GM12878 (cell line): ENCODE measurements at regions of chr1 and their contacts with region 1.

Region 1: DNA sequence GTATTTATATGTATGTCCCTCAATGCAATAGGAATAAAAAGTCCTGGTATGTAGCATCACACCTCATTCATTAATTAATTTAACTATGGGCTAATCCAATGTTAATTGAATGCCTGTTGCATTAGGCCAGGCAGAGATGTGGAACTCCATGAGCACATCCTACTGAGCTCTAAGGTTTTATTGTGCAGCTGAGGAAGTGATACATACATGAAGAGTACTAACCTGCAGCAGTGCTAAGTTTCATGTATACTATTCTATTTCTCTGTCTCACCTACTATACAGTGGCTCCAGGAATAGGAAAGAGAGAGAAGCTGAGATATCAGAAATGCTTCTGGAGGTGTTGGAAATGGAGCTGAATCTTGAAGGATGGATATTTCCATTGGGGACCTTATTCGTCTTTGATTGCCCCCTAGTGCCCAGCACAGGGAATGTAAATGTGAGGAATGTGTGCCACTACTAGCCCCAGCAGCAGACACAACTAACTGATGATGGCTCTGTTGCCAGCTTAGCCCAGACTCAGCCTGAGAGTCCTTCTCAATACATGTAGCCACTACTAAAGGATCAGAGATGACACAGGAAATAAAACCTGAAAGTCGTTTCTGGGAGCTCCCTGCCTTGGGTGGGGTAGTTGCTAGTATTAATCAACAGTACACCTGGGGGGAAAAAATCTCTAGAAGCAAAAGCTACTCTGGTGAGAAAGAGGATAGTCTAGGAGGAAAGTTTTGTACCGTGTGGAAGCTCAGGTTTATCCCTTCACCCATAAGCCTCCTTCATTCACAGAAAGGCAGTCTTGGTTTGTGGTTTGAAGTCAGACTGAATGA is 173.3 kb upstream of the FOXD3 start:
- DNase-seq: no peak
- ATAC-seq: peak; percentile 90
- H3K4me3 ChIP-seq: no peak overlapping the region
- H3K27ac ChIP-seq: no peak overlapping the region
- H3K4me1 ChIP-seq: no peaks in the 10 kb centered on the region
- H3K27me3 ChIP-seq: no peaks in the 10 kb centered on the region; a peak in 2 of 4 replicates
- CTCF ChIP-seq: peak; percentile 67 to 74 (median 69)
- EP300 ChIP-seq: no peak
- POLR2A ChIP-seq: no peak
- RAD21 ChIP-seq: peak; percentile 73

Region 2: GRCh38 chr1:62912028-62912638 is 236.9 kb before region 1 on chr1:
- CTCF ChIA-PET with region 1: interaction called, 7 read pairs
- POLR2A ChIA-PET with region 1: no interaction called
- RAD21 ChIA-PET with region 1: interaction called, 5 read pairs
- SMC1A ChIA-PET with region 1: no interaction called
- in situ Hi-C with region 1: no loop called
- intact Hi-C with region 1: loop called (anchors 5 kb)
- DNase-seq: no peak
- ATAC-seq: peak; percentile 48; the same call in 1 of the 3 replicates
- H3K4me3 ChIP-seq: no peak overlapping the region
- H3K27ac ChIP-seq: no peak overlapping the region
- H3K4me1 ChIP-seq: no peaks in the 10 kb centered on the region
- H3K27me3 ChIP-seq: peaks cover 0 to 2% of the 10 kb centered on the region in 2 experiments; a peak in 1 of 4 replicates
- CTCF ChIP-seq: peak; percentile 55 to 67 (median 66)
- EP300 ChIP-seq: no peak
- POLR2A ChIP-seq: no peak
- RAD21 ChIP-seq: no peak

Region 3: GRCh38 chr1:62962901-62963776 is 185.9 kb before region 1 on chr1:
- CTCF ChIA-PET with region 1: interaction called, 48 read pairs
- POLR2A ChIA-PET with region 1: no interaction called
- RAD21 ChIA-PET with region 1: interaction called, 6 read pairs
- SMC1A ChIA-PET with region 1: interaction called, 19 read pairs
- in situ Hi-C with region 1: loop called (anchors 10 kb)
- intact Hi-C with region 1: loop called (anchors 1 kb)
- DNase-seq: no peak
- ATAC-seq: peak; percentile 92
- H3K4me3 ChIP-seq: no peak overlapping the region
- H3K27ac ChIP-seq: no peak overlapping the region
- H3K4me1 ChIP-seq: peaks cover 10% of the 10 kb centered on the region
- H3K27me3 ChIP-seq: no peaks in the 10 kb centered on the region
- CTCF ChIP-seq: peak; percentile 67 to 71 (median 68)
- EP300 ChIP-seq: no peak
- POLR2A ChIP-seq: no peak
- RAD21 ChIP-seq: peak; percentile 75

Region 4: GRCh38 chr1:63004868-63005267 is 144.2 kb before region 1 on chr1:
- CTCF ChIA-PET with region 1: interaction called, 12 read pairs
- POLR2A ChIA-PET with region 1: no interaction called
- RAD21 ChIA-PET with region 1: interaction called, 10 read pairs
- SMC1A ChIA-PET with region 1: interaction called, 9 read pairs
- in situ Hi-C with region 1: no loop called
- intact Hi-C with region 1: no loop called
- DNase-seq: no peak
- ATAC-seq: no peak
- H3K4me3 ChIP-seq: no peak overlapping the region
- H3K27ac ChIP-seq: no peak overlapping the region
- H3K4me1 ChIP-seq: no peaks in the 10 kb centered on the region
- H3K27me3 ChIP-seq: no peaks in the 10 kb centered on the region; a peak in 1 of 4 replicates
- CTCF ChIP-seq: peak in 1 of 3 experiments; percentile 41; a peak in 2 of 6 replicates
- EP300 ChIP-seq: no peak
- POLR2A ChIP-seq: no peak
- RAD21 ChIP-seq: peak; percentile 60

Region 5: GRCh38 chr1:63063367-63063766 is 85.7 kb before region 1 on chr1:
- CTCF ChIA-PET with region 1: interaction called, 10 read pairs
- POLR2A ChIA-PET with region 1: no interaction called
- RAD21 ChIA-PET with region 1: interaction called, 6 read pairs
- SMC1A ChIA-PET with region 1: interaction called, 12 read pairs
- in situ Hi-C with region 1: no loop called
- intact Hi-C with region 1: loop called (anchors 5 kb)
- DNase-seq: no peak
- ATAC-seq: 0 out of 3 replicates have a peak, but pooled peaks have one; percentile 41
- H3K4me3 ChIP-seq: no peak overlapping the region
- H3K27ac ChIP-seq: no peak overlapping the region
- H3K4me1 ChIP-seq: no peaks in the 10 kb centered on the region
- H3K27me3 ChIP-seq: no peaks in the 10 kb centered on the region; a peak in 2 of 4 replicates
- CTCF ChIP-seq: peak; percentile 15 to 28 (median 25); a peak in 2 of 6 replicates
- EP300 ChIP-seq: no peak
- POLR2A ChIP-seq: no peak
- RAD21 ChIP-seq: peak; percentile 43

Region 6: GRCh38 chr1:63135174-63135512 is 13.9 kb before region 1 on chr1:
- CTCF ChIA-PET with region 1: interaction called, 10 read pairs
- POLR2A ChIA-PET with region 1: no interaction called
- RAD21 ChIA-PET with region 1: no interaction called
- SMC1A ChIA-PET with region 1: interaction called, 6 read pairs
- in situ Hi-C with region 1: no loop called
- intact Hi-C with region 1: no loop called
- DNase-seq: no peak
- ATAC-seq: no peak
- H3K4me3 ChIP-seq: no peak overlapping the region
- H3K27ac ChIP-seq: no peak overlapping the region
- H3K4me1 ChIP-seq: no peaks in the 10 kb centered on the region
- H3K27me3 ChIP-seq: peaks cover 0 to 11% of the 10 kb centered on the region in 2 experiments; a peak in 1 of 4 replicates
- CTCF ChIP-seq: no peak
- EP300 ChIP-seq: no peak
- POLR2A ChIP-seq: no peak
- RAD21 ChIP-seq: no peak